PC-9 (cell line): ENCODE measurements at regions of chr17 and their contacts with region 1.

Region 1: DNA sequence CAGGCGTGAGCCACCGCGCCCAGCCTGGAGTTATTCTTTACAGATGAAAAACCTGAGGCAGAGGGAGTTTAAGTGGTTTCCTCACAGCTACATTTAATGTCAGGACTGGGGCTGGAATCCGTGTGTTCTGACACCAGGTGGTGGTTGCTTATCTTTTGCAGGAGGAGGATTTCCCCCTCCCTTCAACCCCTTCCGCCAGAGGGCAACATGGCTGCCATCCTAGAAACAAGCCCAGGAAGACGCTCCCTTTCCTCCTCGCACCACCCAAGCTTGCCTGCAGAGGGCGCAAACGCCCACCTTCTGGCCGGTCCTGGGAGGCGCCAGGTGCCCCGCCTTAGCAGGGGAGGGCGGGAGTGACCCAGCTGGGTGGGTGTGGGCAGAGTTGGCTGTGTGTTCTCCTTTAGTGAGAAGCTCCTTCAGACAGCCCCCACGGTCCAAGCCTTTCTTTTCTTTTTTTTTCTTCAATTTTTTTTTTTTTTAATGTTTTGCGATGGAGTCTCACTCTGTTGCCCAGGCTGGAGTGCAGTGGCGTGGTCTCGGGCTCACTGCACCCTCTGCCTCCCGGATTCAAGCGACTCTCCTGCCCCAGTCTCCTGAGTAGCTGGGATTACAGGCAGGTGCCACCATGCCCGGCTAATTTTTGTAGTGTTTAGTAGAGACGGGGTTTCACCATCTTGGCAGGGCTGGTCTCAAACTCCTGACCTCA is 9.9 kb upstream of the RAP1GAP2 start:
- DNase-seq: peak; percentile 68 to 97
- H3K4me3 ChIP-seq: no peak overlapping the region
- H3K27ac ChIP-seq: no peak overlapping the region
- H3K4me1 ChIP-seq: no peaks in the 10 kb centered on the region
- H3K27me3 ChIP-seq: peaks cover 24% of the 10 kb centered on the region
- CTCF ChIP-seq: peak; percentile 87

Region 2: DNA sequence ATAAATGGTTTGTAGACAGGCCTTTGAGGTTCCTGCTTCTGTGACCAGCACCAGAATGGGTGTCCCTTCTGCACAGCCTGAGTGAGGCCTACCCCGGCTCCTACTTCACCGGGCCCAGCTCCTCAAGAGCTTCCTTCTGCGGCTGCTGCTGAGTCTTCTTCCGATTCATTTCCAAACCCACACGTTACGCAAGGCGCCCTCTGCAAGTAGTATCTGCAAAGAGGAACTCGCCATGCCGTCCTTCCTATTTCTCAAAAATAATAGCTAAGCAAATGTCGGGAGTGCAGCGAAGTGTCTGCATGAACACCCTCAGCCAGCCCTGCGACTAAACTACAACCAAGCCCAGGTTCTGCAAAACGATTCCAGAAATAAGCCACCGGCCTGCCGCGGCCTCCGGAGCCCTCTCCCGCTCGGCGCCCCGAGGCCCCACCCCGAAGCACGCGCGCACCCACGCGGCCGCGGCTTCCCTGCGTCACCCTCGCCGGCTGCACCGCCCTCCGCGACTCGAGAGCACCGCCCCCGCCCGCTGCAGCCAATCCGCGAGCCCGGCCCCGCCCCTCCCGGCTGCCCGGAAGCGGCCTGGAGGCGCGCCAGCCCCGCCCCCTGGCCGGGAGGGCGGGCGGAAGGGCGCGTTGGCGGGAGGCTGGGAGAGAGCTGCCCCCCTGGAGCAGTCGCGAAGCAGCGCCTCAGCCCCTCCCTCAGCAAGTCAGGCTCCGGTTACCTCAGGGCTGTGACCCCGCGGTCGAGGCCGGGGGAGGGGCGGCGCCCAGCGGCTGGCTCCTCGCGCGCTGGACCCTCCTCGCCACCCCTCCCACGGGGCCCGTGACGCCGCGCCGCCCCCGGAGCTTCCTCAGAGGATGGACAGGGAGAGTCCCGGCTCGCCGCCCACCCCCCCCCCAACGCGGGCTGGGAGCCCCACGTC is 393.8 kb before region 1 on chr17:
- CTCF ChIA-PET with region 1: no interaction called
- POLR2A ChIA-PET with region 1: no interaction called
- intact Hi-C with region 1: no loop called
- DNase-seq: peak; percentile 84 to 99
- H3K4me3 ChIP-seq: peak overlapping the region; percentile 70
- H3K27ac ChIP-seq: peak overlapping the region; percentile 84
- H3K4me1 ChIP-seq: peaks cover 32% of the 10 kb centered on the region
- H3K27me3 ChIP-seq: no peaks in the 10 kb centered on the region
- CTCF ChIP-seq: no peak

Region 3: DNA sequence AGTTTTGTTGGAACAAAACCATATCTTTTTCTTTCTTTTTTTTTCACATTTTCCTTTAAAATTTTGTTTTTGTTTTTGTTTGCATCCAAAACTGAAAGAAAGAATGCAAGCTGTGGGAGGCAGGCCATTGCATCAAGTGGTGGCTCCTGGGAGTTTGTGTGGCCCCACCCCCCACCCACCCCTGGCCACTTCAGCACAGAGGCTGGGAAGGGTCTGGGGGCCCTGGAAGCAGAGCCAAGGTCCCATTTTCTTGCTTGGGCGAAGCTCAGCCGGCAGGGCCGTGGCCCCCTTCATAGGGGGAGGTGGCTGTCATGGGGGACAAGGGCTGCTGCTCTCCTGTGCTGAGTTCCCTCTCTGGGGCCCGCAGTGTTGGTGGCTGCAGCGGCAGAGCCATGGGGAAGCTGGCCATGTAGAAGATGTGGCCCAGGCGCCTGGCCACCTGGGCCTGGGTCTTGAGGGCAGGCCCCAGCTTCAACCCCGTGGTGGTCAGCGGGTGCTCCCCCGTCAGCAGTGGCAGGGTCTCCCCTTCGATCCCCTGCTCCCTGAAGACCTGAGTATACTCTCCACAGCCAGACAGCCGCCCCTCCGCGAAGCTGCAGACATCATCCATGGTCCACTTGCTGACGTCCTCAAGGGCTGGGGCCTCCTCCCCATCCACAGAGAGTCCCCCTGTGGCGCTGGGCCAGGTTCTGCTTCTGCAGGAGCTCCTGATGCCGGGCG is 173.1 kb before region 1 on chr17:
- CTCF ChIA-PET with region 1: no interaction called
- POLR2A ChIA-PET with region 1: no interaction called
- intact Hi-C with region 1: no loop called
- DNase-seq: no peak
- H3K4me3 ChIP-seq: no peak overlapping the region
- H3K27ac ChIP-seq: no peak overlapping the region
- H3K4me1 ChIP-seq: no peaks in the 10 kb centered on the region
- H3K27me3 ChIP-seq: no peaks in the 10 kb centered on the region
- CTCF ChIP-seq: no peak

Region 4: GRCh38 chr17:2828397-2829038 is 42.2 kb after region 1 on chr17:
- CTCF ChIA-PET with region 1: interaction called, 4 read pairs
- POLR2A ChIA-PET with region 1: interaction called, 9 read pairs
- intact Hi-C with region 1: loop called (anchors 5 kb)
- DNase-seq: peak in 1 of 2 experiments; percentile 85
- H3K4me3 ChIP-seq: no peak overlapping the region
- H3K27ac ChIP-seq: no peak overlapping the region
- H3K4me1 ChIP-seq: no peaks in the 10 kb centered on the region
- H3K27me3 ChIP-seq: 0 out of 2 replicates have a peak, but pooled peaks cover 3% of the 10 kb centered on the region
- CTCF ChIP-seq: peak; percentile 93

Region 5: GRCh38 chr17:2844416-2844815 is 58.1 kb after region 1 on chr17:
- CTCF ChIA-PET with region 1: interaction called, 15 read pairs
- POLR2A ChIA-PET with region 1: no interaction called
- intact Hi-C with region 1: no loop called
- DNase-seq: peak in 1 of 2 experiments; percentile 49
- H3K4me3 ChIP-seq: no peak overlapping the region
- H3K27ac ChIP-seq: no peak overlapping the region
- H3K4me1 ChIP-seq: 0 out of 2 replicates have a peak, but pooled peaks cover 9% of the 10 kb centered on the region
- H3K27me3 ChIP-seq: no peaks in the 10 kb centered on the region
- CTCF ChIP-seq: no peak